ENCODE measurements at regions of chr6 and their contacts with region 1.

Region 1: DNA sequence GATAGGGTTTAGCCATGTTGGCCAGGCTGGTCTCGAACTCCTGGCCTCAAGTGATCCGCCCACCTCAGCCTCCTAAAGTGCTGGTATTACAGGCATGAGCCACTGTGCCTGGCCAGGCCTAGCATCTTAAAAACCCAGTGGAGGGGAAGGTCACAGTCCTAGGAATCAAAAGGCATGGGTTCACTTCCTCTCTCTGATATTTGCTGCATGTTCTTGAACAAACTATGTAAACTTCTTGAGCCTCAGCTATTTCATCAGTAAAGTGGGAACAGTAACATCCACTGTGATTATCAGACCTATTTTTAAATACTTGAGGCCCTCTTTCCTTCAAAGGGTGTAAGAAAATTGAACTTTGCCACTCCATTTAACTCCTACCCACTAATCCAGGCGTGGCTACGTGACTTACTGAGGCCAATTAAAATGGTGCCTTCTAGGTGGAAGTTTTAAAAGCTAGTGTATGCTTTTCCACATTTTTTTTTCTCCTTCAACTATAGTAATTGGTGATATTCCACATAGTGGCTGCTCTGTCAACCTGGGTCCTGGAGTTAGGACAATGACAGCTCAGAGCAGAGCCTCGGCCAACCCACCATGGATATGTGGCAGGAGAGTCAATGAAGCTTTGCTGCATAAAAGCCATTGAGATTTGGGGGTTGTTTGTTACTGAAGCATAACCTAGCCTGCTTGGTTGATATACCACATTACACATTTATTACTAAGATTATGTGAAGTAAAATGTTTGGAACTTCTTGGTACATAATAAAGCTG is 32.2 kb upstream of the IER3 start:
- DNase-seq: no peak
- ATAC-seq: no peak
- H3K4me3 Mint-ChIP-seq: no peak overlapping the region
- H3K27ac Mint-ChIP-seq: no peak overlapping the region
- H3K4me1 Mint-ChIP-seq: no peaks in the 10 kb centered on the region
- H3K27me3 Mint-ChIP-seq: peaks cover 17% of the 10 kb centered on the region
- CTCF ChIP-seq: no peak

Region 2: GRCh38 chr6:29092957-29093356 is 1683.6 kb before region 1 on chr6:
- CTCF ChIA-PET with region 1: no interaction called
- POLR2A ChIA-PET with region 1: interaction called, 15 read pairs
- intact Hi-C with region 1: no loop called
- DNase-seq: no peak
- ATAC-seq: no peak
- H3K4me3 Mint-ChIP-seq: no peak overlapping the region
- H3K27ac Mint-ChIP-seq: no peak overlapping the region
- H3K4me1 Mint-ChIP-seq: no peaks in the 10 kb centered on the region
- H3K27me3 Mint-ChIP-seq: peaks cover 9% of the 10 kb centered on the region
- CTCF ChIP-seq: no peak

Region 3: GRCh38 chr6:31620586-31621319 is 844.2 kb after region 1 on chr6 and contains the start of gene PRRC2A:
- CTCF ChIA-PET with region 1: no interaction called
- POLR2A ChIA-PET with region 1: no interaction called
- intact Hi-C with region 1: no loop called
- DNase-seq: no peak
- ATAC-seq: peak; percentile 30
- H3K4me3 Mint-ChIP-seq: peak within 1 kb of the TSS; percentile 86
- H3K27ac Mint-ChIP-seq: peak within 1 kb of the TSS; percentile 95
- H3K4me1 Mint-ChIP-seq: peaks cover 38% of the 10 kb centered on the region
- H3K27me3 Mint-ChIP-seq: no peaks in the 10 kb centered on the region
- CTCF ChIP-seq: no peak
- total RNA-seq, gene PRRC2A: 246 and 283 TPM in 2 replicates

Measured in activated B cell treated with CpG ODN at 0.5 μM for 24 hours (primary cell).